ENCODE measurements at regions of chr1 and their contacts with region 1.

Region 1: DNA sequence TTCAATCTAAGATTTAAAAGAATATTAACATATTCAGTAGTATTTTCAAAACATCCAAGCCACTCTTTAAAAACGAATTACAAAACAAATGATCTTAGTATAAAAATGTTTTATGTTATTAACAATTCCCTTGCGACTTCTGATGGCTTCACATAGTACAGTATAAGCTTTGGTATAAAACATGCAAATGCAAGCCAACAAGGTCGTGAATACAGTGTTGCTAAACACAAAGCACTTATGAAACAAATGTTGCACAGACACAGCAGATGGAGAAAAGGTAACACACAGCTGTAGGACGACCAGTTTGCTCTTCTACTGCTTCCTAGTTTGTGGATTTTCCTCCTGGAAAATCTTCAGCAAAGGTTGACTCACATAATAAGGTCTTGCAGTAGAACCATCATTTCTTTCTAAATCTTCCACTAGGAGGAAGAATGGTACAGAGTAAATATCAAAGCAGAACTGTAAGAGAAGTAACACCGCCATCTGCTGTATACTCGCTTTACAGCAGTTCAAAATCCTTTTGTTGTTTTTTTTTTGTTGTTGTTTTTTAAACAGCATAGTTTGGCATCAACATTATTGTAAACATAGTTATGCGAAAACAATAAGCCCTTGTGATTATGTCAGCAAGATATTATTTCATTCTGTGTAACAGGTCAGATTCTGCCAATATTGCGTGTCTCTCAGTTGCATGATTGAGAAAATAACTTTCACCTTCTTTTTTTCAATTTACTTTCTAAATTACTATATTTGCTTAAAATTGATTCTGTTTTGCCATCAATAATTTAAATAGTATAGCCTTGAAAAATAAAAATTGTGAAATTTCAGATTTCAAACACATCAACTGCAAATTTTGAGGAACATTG is 69.5 kb downstream of the LHX8 start:
- DNase-seq: peak; percentile 74
- H3K4me3 ChIP-seq: no peak overlapping the region
- H3K27ac ChIP-seq: no peak overlapping the region
- H3K4me1 ChIP-seq: no peaks in the 10 kb centered on the region
- H3K27me3 ChIP-seq: no peaks in the 10 kb centered on the region; the same call in 1 of the 2 replicates

Region 2: GRCh38 chr1:74771913-74772515 is 431.6 kb before region 1 on chr1:
- in situ Hi-C with region 1: loop called (anchors 5 kb)
- DNase-seq: peak; percentile 65
- H3K4me3 ChIP-seq: no peak overlapping the region
- H3K27ac ChIP-seq: no peak overlapping the region
- H3K4me1 ChIP-seq: no peaks in the 10 kb centered on the region
- H3K27me3 ChIP-seq: peaks cover 18% of the 10 kb centered on the region

Region 3: GRCh38 chr1:74964508-74965102 is 239.0 kb before region 1 on chr1:
- in situ Hi-C with region 1: no loop called
- DNase-seq: peak; percentile 8
- H3K4me3 ChIP-seq: no peak overlapping the region
- H3K27ac ChIP-seq: no peak overlapping the region
- H3K4me1 ChIP-seq: no peaks in the 10 kb centered on the region
- H3K27me3 ChIP-seq: no peaks in the 10 kb centered on the region

Region 4: GRCh38 chr1:75373533-75374320 is 170.1 kb after region 1 on chr1:
- in situ Hi-C with region 1: no loop called
- DNase-seq: no peak
- H3K4me3 ChIP-seq: no peak overlapping the region
- H3K27ac ChIP-seq: no peak overlapping the region
- H3K4me1 ChIP-seq: no peaks in the 10 kb centered on the region
- H3K27me3 ChIP-seq: no peaks in the 10 kb centered on the region

Measured in GM23248 (cell line).